Endothelial cell of umbilical vein (primary cell): ENCODE measurements at regions of chr20 and their contacts with region 1.

Region 1: GRCh38 chr20:407133-407952 is 756 bp upstream of the RBCK1 start:
- DNase-seq: peak; percentile 84
- H3K4me3 ChIP-seq: peak overlapping the region; percentile 14 to 51 (median 29)
- H3K27ac ChIP-seq: peak overlapping the region; percentile 50
- H3K4me1 ChIP-seq: peaks cover 17% of the 10 kb centered on the region
- H3K27me3 ChIP-seq: no peaks in the 10 kb centered on the region
- CTCF ChIP-seq: peak; percentile 11 to 18
- POLR2A ChIP-seq: peak; percentile 61

Region 2: DNA sequence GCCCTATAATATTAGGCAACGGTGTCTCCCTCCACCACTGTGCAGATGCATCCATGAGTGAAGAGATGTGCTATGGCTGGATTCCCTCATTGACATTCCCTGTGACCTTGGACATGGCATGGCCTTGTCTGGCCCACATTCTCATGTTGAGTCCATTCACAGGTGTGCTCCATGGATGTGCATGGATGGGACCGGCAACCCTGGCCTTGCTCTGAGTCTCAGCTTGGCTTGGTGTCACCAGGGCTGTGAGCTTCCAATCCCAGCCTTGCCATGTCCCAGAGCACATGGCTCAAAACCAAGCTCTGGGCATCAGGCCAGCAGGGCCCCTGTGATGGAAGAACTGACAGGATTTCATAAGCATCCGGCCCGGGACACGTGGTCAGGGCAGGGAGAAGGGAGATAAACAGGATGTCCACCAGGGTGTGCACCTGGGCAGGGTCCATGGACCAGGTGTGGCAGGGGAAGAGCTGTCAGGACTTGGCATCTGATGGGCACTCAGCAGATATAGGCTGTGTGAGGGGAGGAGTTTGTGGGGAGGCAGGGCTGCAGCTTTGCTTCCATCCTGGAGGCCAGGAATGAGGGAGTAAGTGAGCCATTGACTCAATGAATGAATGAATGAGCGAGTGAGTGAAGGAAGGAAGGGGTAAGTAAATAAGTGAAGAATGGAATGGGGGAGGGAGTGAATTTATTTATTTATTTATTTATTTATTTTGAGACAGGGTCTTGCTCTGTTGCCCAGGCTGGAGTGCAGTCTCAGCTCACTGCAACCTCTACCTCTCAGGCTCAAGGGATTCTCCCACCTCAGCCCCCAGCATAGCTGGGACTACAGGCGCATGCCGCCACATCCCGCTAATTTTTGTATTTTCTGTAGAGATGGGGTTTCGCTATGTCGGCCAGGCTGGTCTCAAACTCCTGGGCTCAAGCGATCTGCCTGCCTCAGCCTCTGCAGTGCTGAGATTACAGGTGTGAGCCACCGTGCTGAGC is 44.8 kb before region 1 on chr20:
- CTCF ChIA-PET with region 1: interaction called, 16 read pairs
- POLR2A ChIA-PET with region 1: no interaction called
- dilution Hi-C with region 1: no loop called
- intact Hi-C with region 1: loop called (anchors 1 kb)
- DNase-seq: peak; percentile 89
- H3K4me3 ChIP-seq: no peak overlapping the region
- H3K27ac ChIP-seq: no peak overlapping the region
- H3K4me1 ChIP-seq: peaks cover 7% of the 10 kb centered on the region
- H3K27me3 ChIP-seq: no peaks in the 10 kb centered on the region
- CTCF ChIP-seq: peak in 1 of 2 donors; percentile 39
- POLR2A ChIP-seq: no peak

Region 3: GRCh38 chr20:371755-372542 is 35.4 kb before region 1 on chr20:
- CTCF ChIA-PET with region 1: interaction called, 7 read pairs
- POLR2A ChIA-PET with region 1: interaction called, 6 read pairs
- dilution Hi-C with region 1: no loop called
- intact Hi-C with region 1: loop called (anchors 2 kb)
- DNase-seq: peak; percentile 93
- H3K4me3 ChIP-seq: no peak overlapping the region
- H3K27ac ChIP-seq: peak overlapping the region; percentile 82
- H3K4me1 ChIP-seq: peaks cover 52% of the 10 kb centered on the region
- H3K27me3 ChIP-seq: no peaks in the 10 kb centered on the region
- CTCF ChIP-seq: no peak
- POLR2A ChIP-seq: no peak

Region 4: GRCh38 chr20:381581-382290 is 25.6 kb before region 1 on chr20:
- CTCF ChIA-PET with region 1: interaction called, 5 read pairs
- POLR2A ChIA-PET with region 1: interaction called, 4 read pairs
- dilution Hi-C with region 1: no loop called
- intact Hi-C with region 1: loop called (anchors 2 kb)
- DNase-seq: peak; percentile 48
- H3K4me3 ChIP-seq: peak overlapping the region; percentile 62 to 92 (median 88)
- H3K27ac ChIP-seq: no peak overlapping the region
- H3K4me1 ChIP-seq: peaks cover 6% of the 10 kb centered on the region
- H3K27me3 ChIP-seq: no peaks in the 10 kb centered on the region
- CTCF ChIP-seq: no peak
- POLR2A ChIP-seq: peak; percentile 36

Region 5: DNA sequence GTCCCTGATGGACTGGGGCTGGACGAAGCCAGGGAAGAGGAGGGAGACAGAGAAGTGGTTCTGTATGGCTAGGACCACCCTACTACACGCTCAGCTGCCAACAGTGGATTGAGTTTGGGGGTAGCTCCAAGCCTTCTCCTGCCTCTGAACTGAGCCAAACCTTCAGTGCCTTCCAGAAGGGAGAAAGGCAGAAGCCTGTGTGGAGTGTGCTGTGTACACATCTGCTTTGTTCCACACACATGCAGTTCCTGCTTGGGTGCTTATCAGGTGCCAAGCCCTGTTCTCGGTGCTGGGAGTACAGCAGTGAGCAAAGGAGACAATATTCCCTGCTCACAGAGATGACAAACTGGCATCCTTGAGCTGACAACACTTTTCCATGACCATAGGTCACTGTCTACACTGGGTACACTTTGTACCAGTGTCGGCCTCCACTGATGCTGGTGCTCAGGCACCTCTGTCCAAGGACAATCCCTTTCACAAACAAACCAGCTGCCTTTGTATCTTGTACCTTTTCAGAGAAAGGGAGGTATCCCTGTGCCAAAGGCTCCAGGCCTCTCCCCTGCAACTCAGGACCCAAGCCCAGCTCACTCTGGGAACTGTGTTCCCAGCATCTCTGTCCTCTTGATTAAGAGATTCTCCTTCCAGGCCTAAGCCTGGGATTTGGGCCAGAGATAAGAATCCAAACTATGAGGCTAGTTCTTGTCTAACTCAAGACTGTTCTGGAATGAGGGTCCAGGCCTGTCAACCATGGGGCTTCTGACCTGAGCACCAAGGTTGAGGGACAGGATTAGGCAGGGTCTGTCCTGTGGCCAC is 10.5 kb before region 1 on chr20:
- CTCF ChIA-PET with region 1: interaction called, 10 read pairs
- POLR2A ChIA-PET with region 1: no interaction called
- dilution Hi-C with region 1: no loop called
- intact Hi-C with region 1: no loop called
- DNase-seq: no peak
- H3K4me3 ChIP-seq: no peak overlapping the region
- H3K27ac ChIP-seq: no peak overlapping the region
- H3K4me1 ChIP-seq: no peaks in the 10 kb centered on the region
- H3K27me3 ChIP-seq: no peaks in the 10 kb centered on the region
- CTCF ChIP-seq: no peak
- POLR2A ChIP-seq: no peak

Region 6: DNA sequence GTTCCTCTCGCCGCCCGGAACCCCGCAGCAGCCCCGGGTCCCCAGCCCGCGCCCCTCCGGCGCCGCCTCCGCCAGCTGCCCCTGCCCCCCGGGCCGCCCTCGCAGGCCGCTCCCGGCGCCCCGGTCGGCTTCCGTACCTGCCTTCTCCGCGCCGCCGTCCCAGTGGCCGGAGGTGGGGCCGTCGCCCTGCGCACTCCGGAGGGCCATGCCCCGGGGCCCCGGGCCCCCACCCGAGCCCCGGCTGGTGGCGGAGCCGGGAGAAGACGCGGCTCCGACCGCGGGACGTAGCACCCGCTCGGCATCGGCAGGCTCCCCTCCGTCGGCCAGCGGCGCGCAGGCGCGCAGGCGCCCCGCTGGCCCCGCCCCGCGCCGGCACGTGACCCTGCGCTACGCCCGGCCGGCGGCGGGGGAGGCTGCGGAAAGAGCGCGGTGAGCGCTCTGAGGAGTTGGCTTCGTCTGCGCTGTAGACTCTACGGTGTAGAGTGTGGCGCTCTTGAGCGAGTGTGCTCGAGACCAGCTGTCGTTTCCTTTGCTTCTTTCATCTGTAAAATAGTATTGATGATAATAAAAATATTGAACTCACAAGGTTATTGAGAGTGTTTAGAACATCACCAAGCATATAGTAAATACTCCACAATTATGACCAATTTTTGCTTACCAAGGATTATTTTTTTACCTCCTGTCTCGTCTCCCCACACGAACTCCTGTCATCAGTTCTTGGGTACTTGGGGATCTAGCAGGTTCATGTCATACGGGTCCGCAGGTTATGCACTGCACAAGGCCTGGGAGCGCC is 55.1 kb after region 1 on chr20 and contains the start of gene TBC1D20:
- CTCF ChIA-PET with region 1: no interaction called
- POLR2A ChIA-PET with region 1: no interaction called
- dilution Hi-C with region 1: no loop called
- intact Hi-C with region 1: loop called (anchors 2 kb)
- DNase-seq: peak; percentile 85
- H3K4me3 ChIP-seq: peak within 1 kb of the TSS; percentile 55 to 70 (median 66)
- H3K27ac ChIP-seq: peak within 1 kb of the TSS; percentile 48
- H3K4me1 ChIP-seq: peaks cover 28% of the 10 kb centered on the region
- H3K27me3 ChIP-seq: no peaks in the 10 kb centered on the region
- CTCF ChIP-seq: peak in 1 of 2 donors; percentile 16
- POLR2A ChIP-seq: peak; percentile 75
- total RNA-seq, gene TBC1D20: 30.6 and 34.3 TPM in 2 replicates

Region 7: DNA sequence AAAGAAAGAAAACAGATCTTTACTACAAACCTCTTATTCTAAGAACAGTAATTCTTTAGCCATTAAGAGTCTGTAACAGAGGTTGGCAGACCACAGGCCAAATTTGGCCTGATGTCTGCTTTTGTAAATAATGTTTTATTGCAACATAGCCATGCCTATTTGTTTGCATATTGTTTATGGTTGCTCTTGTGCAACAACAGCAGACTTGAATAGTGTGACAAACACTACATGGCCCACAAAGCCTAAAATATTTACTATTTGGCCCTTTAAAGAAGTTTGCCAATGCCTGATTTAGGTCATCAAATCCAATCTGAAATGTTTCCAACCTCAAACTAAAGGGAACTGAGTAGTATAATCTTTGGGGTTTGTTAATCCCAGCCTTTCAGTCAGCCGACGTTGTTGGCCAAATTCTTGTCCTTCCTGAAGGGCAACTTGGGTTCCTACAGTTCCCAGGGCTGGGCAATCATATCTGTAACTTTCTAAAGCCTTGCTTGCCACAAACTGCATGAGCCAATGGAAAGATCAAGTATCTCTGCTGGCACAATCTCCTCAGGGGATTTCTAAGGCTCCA is 88.9 kb after region 1 on chr20:
- CTCF ChIA-PET with region 1: no interaction called
- POLR2A ChIA-PET with region 1: no interaction called
- dilution Hi-C with region 1: no loop called
- intact Hi-C with region 1: no loop called
- DNase-seq: no peak
- H3K4me3 ChIP-seq: no peak overlapping the region
- H3K27ac ChIP-seq: no peak overlapping the region
- H3K4me1 ChIP-seq: no peaks in the 10 kb centered on the region
- H3K27me3 ChIP-seq: no peaks in the 10 kb centered on the region
- CTCF ChIP-seq: no peak
- POLR2A ChIP-seq: no peak

Region 8: GRCh38 chr20:507761-508332 is 100.5 kb after region 1 on chr20:
- CTCF ChIA-PET with region 1: no interaction called
- POLR2A ChIA-PET with region 1: no interaction called
- dilution Hi-C with region 1: no loop called
- intact Hi-C with region 1: no loop called
- DNase-seq: no peak
- H3K4me3 ChIP-seq: no peak overlapping the region
- H3K27ac ChIP-seq: no peak overlapping the region
- H3K4me1 ChIP-seq: no peaks in the 10 kb centered on the region
- H3K27me3 ChIP-seq: no peaks in the 10 kb centered on the region
- CTCF ChIP-seq: no peak
- POLR2A ChIP-seq: no peak

Region 9: DNA sequence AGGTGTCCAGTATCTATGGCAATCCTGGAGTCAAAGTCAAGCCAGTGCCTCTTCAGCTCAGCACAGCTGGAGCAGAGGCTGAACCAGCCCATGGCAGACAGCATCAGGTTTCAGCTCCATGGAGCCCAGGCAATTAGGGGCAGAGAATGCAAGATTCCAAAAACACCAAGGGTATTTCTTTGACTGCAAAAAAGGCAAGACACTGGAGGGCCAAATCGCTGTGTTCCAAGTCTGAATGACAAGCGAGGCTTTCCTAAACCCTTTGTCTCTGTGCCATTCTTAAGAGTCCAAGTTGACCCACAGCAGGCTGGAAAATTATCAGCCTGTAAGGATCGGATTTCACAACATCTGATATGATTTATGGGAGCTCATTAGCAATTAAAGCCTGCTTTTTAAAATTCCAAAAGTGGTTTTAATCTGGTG is 1838.7 kb after region 1 on chr20:
- CTCF ChIA-PET with region 1: no interaction called
- POLR2A ChIA-PET with region 1: no interaction called
- dilution Hi-C with region 1: no loop called
- intact Hi-C with region 1: no loop called
- DNase-seq: no peak
- H3K4me3 ChIP-seq: no peak overlapping the region
- H3K27ac ChIP-seq: no peak overlapping the region
- H3K4me1 ChIP-seq: no peaks in the 10 kb centered on the region
- H3K27me3 ChIP-seq: peaks cover 0 to 5% of the 10 kb centered on the region in 2 experiments
- CTCF ChIP-seq: no peak
- POLR2A ChIP-seq: no peak